IMR-90 (cell line): ENCODE measurements at regions of chr11 and their contacts with region 1.

Region 1: DNA sequence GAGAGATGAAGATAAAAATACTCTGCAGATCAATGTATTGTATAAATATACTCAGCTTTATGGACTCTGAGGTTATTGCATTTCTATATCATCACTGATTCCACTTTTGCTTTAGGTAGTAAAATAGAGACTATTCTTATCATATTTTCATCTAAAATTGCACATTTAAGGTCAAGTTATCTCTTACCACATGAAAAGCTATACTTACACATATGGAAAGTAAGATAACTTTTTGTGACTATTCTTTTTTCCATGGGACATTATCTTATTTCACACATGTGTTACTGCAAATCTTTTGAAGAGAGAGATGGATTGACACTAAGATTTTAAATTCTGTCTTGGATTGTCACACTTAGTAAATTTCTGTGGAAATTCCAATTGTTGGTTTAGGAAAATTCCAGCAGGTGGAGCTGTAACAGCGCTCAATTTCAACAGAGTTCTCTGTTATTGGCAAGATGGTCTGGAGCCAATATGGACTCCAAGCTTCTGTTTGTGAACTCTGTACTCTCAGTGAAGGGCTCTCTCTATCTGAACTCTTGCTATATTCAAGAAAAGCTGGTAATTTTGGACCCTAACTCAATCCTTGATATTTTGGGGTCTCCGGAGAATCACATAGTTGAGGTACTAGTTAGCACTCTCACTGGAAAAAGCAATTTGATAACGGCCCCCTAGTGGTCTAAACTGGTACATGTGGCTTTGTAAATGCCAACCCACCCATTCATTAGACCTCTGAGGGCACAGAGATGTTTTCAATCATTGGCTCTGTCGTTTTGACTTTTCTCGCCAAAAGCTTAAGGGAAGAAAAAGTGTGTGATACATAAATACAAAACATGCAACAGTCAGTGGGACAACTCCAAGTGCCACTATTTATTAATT is 429.7 kb downstream of the ETS1 start:
- DNase-seq: peak; percentile 78
- ATAC-seq: peak; percentile 94
- H3K4me3 ChIP-seq: peak overlapping the region; percentile 41; the same call in 1 of the 2 replicates
- H3K27ac ChIP-seq: no peak overlapping the region
- H3K4me1 ChIP-seq: no peaks in the 10 kb centered on the region
- H3K27me3 ChIP-seq: peaks cover 31% of the 10 kb centered on the region
- CTCF ChIP-seq: peak; percentile 67
- POLR2A ChIP-seq: no peak
- RAD21 ChIP-seq: peak; percentile 72

Region 2: GRCh38 chr11:126440792-126441514 is 1716.7 kb before region 1 on chr11:
- CTCF ChIA-PET with region 1: no interaction called
- POLR2A ChIA-PET with region 1: no interaction called
- dilution Hi-C with region 1: no loop called
- in situ Hi-C with region 1: no loop called
- intact Hi-C with region 1: loop called (anchors 2 kb)
- DNase-seq: peak; percentile 59
- ATAC-seq: peak; percentile 96
- H3K4me3 ChIP-seq: no peak overlapping the region
- H3K27ac ChIP-seq: no peak overlapping the region
- H3K4me1 ChIP-seq: no peaks in the 10 kb centered on the region
- H3K27me3 ChIP-seq: no peaks in the 10 kb centered on the region; the same call in 1 of the 2 replicates
- CTCF ChIP-seq: peak; percentile 96
- POLR2A ChIP-seq: no peak
- RAD21 ChIP-seq: peak; percentile 97

Region 3: GRCh38 chr11:127843483-127844396 is 313.9 kb before region 1 on chr11:
- CTCF ChIA-PET with region 1: no interaction called
- POLR2A ChIA-PET with region 1: no interaction called
- dilution Hi-C with region 1: no loop called
- in situ Hi-C with region 1: no loop called
- intact Hi-C with region 1: loop called (anchors 10 kb)
- DNase-seq: peak; percentile 55
- ATAC-seq: peak; percentile 82
- H3K4me3 ChIP-seq: no peak overlapping the region
- H3K27ac ChIP-seq: no peak overlapping the region
- H3K4me1 ChIP-seq: no peaks in the 10 kb centered on the region
- H3K27me3 ChIP-seq: no peaks in the 10 kb centered on the region
- CTCF ChIP-seq: peak; percentile 58
- POLR2A ChIP-seq: no peak
- RAD21 ChIP-seq: peak; percentile 50

Region 4: GRCh38 chr11:128026596-128026995 is 131.1 kb before region 1 on chr11:
- CTCF ChIA-PET with region 1: interaction called, 10 read pairs
- POLR2A ChIA-PET with region 1: interaction called, 3 read pairs
- dilution Hi-C with region 1: no loop called
- in situ Hi-C with region 1: no loop called
- intact Hi-C with region 1: loop called (anchors 1 kb)
- DNase-seq: peak; percentile 98
- ATAC-seq: peak; percentile 88
- H3K4me3 ChIP-seq: no peak overlapping the region
- H3K27ac ChIP-seq: no peak overlapping the region
- H3K4me1 ChIP-seq: peaks cover 9% of the 10 kb centered on the region
- H3K27me3 ChIP-seq: no peaks in the 10 kb centered on the region
- CTCF ChIP-seq: no peak
- POLR2A ChIP-seq: no peak
- RAD21 ChIP-seq: no peak

Region 5: DNA sequence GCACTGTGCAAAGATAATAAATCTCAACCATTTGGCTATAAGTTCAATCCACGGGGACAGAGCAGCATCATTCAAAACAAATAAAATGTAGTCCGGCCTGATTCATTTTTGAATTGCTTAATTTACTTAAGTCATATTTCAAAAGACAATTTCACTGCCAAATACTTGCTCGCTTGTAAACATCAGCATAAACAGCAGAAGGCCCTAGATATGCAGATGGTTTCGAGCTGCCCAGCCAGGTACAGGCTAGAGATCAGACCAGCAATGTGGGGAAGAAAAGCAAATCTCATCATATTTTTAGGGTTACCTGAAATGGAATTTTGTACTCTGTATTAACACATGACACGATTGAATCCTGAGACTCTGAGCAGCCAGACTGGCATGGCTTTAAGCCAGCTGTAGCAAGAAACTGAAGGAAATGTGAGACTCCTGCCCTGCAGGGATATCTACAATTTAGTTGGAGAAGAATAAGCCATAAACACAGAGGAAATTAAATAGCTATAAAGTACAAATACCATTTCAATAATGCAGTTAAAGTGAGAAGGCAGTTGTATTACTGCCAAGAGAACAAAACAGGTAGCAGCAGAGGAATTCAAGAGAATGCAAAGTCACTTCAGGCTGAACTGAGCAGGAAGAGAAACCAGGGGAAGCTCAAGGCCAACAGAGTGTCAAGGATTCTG is 10.6 kb before region 1 on chr11:
- CTCF ChIA-PET with region 1: interaction called, 10 read pairs
- POLR2A ChIA-PET with region 1: no interaction called
- dilution Hi-C with region 1: no loop called
- in situ Hi-C with region 1: no loop called
- intact Hi-C with region 1: no loop called
- DNase-seq: no peak
- ATAC-seq: 0 out of 2 replicates have a peak, but pooled peaks have one; percentile 11
- H3K4me3 ChIP-seq: no peak overlapping the region
- H3K27ac ChIP-seq: no peak overlapping the region
- H3K4me1 ChIP-seq: no peaks in the 10 kb centered on the region
- H3K27me3 ChIP-seq: peaks cover 33% of the 10 kb centered on the region
- CTCF ChIP-seq: no peak
- POLR2A ChIP-seq: no peak
- RAD21 ChIP-seq: no peak

Region 6: GRCh38 chr11:128172046-128172878 is 14.6 kb after region 1 on chr11:
- CTCF ChIA-PET with region 1: interaction called, 18 read pairs
- POLR2A ChIA-PET with region 1: interaction called, 6 read pairs
- dilution Hi-C with region 1: no loop called
- in situ Hi-C with region 1: no loop called
- intact Hi-C with region 1: no loop called
- DNase-seq: peak; percentile 86
- ATAC-seq: peak; percentile 87
- H3K4me3 ChIP-seq: no peak overlapping the region
- H3K27ac ChIP-seq: no peak overlapping the region
- H3K4me1 ChIP-seq: peaks cover 2% of the 10 kb centered on the region; the same call in 1 of the 2 replicates
- H3K27me3 ChIP-seq: peaks cover 7% of the 10 kb centered on the region
- CTCF ChIP-seq: peak; percentile 92
- POLR2A ChIP-seq: peak; percentile 37; the same call in 1 of the 2 replicates
- RAD21 ChIP-seq: peak; percentile 95

Region 7: GRCh38 chr11:128956401-128957201 is 798.9 kb after region 1 on chr11:
- CTCF ChIA-PET with region 1: interaction called, 3 read pairs
- POLR2A ChIA-PET with region 1: no interaction called
- dilution Hi-C with region 1: no loop called
- in situ Hi-C with region 1: loop called (anchors 25 kb)
- intact Hi-C with region 1: no loop called
- DNase-seq: peak; percentile 78
- ATAC-seq: peak; percentile 83
- H3K4me3 ChIP-seq: no peak overlapping the region
- H3K27ac ChIP-seq: no peak overlapping the region
- H3K4me1 ChIP-seq: no peaks in the 10 kb centered on the region
- H3K27me3 ChIP-seq: peaks cover 10% of the 10 kb centered on the region
- CTCF ChIP-seq: peak; percentile 88
- POLR2A ChIP-seq: no peak
- RAD21 ChIP-seq: peak; percentile 90